PC-9 (cell line): ENCODE measurements at regions of chr9 and their contacts with region 1.

Region 1: GRCh38 chr9:14768405-14769229 is 46.1 kb upstream of the CER1 start:
- DNase-seq: peak in 1 of 2 experiments; percentile 2
- H3K4me3 ChIP-seq: no peak overlapping the region
- H3K27ac ChIP-seq: no peak overlapping the region
- H3K4me1 ChIP-seq: peaks cover 6% of the 10 kb centered on the region; the same call in 1 of the 2 replicates
- H3K27me3 ChIP-seq: no peaks in the 10 kb centered on the region
- CTCF ChIP-seq: peak; percentile 83

Region 2: DNA sequence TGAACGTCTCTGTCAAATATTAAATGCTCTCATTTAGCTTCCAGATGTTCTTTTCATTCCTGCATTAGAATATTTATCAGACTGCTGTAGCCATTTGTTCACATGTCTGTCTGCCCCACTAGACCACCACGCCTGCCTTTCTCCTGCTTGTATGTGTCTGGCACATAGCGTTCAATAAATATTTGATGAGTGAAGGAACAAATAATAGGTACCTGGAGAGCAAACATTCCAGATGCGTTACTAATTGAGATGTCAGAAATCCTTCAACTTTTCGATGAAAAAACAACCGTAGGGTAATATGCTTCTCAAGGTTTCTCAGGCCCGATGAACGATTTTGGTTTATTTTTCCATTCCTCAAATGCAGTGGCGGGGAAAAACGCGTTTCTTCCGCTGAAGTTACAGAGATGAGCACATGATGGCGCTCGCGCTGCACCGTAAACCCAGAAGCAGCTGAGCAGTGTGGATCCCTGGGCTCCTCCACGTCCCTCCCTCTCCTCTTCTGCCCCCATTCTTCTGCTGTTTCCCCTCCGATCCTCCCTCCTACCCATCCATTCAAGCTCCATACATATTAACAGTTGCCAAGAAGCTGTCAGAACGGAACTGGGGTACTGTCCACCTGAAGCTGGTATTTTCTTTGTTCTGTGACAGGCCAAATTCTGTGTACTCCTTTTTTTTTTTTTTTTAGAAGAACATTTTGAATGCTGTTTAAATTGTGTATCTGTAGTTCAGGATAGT is 1734.5 kb before region 1 on chr9:
- CTCF ChIA-PET with region 1: no interaction called
- POLR2A ChIA-PET with region 1: no interaction called
- intact Hi-C with region 1: loop called (anchors 5 kb)
- DNase-seq: peak; percentile 37 to 57
- H3K4me3 ChIP-seq: peak overlapping the region; percentile 37; the same call in 1 of the 2 replicates
- H3K27ac ChIP-seq: no peak overlapping the region
- H3K4me1 ChIP-seq: no peaks in the 10 kb centered on the region
- H3K27me3 ChIP-seq: no peaks in the 10 kb centered on the region
- CTCF ChIP-seq: peak; percentile 75

Region 3: GRCh38 chr9:13427587-13427986 is 1341.0 kb before region 1 on chr9:
- CTCF ChIA-PET with region 1: no interaction called
- POLR2A ChIA-PET with region 1: no interaction called
- intact Hi-C with region 1: loop called (anchors 2 kb)
- DNase-seq: peak in 1 of 2 experiments; percentile 5
- H3K4me3 ChIP-seq: no peak overlapping the region
- H3K27ac ChIP-seq: no peak overlapping the region
- H3K4me1 ChIP-seq: no peaks in the 10 kb centered on the region
- H3K27me3 ChIP-seq: no peaks in the 10 kb centered on the region
- CTCF ChIP-seq: peak; percentile 80

Region 4: GRCh38 chr9:14466429-14466818 is 302.2 kb before region 1 on chr9:
- CTCF ChIA-PET with region 1: no interaction called
- POLR2A ChIA-PET with region 1: no interaction called
- intact Hi-C with region 1: loop called (anchors 2 kb)
- DNase-seq: no peak
- H3K4me3 ChIP-seq: no peak overlapping the region
- H3K27ac ChIP-seq: no peak overlapping the region
- H3K4me1 ChIP-seq: no peaks in the 10 kb centered on the region
- H3K27me3 ChIP-seq: 0 out of 2 replicates have a peak, but pooled peaks cover 2% of the 10 kb centered on the region
- CTCF ChIP-seq: no peak

Region 5: DNA sequence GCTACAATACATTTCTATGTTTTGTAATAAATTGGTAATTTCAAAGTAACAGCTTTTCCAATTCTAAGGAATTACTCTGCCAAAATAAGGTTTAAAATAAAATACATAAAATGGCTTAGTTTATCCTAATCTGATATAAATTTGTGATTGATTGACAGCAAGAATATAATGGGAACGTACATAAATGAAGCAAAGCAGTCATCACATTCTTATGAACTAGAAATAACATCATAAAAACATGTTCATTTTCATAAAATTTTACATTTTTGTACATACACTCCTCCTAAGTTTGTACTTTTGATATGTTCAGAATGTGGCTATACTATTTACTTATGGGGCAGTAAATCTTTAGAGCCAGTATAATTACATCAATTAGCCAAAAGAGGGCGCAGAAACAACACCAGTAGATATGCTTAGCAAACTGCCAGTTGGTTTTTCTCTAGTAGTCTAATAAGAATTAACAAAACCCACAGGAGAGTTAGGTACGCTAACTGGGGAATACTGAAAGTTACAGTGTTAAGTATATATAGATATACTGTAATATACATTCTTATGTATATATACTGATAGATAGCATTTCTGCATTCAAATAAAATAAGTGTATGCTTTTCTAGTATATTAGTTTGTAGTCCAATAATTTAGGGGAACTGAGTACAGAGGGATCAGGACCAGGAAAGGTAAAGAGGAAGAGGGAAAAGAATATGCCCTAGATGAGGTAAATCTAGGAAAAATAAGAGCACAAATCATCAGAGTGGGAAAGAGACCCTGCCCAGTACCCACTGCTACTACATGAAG is 152.2 kb before region 1 on chr9:
- CTCF ChIA-PET with region 1: no interaction called
- POLR2A ChIA-PET with region 1: no interaction called
- intact Hi-C with region 1: loop called (anchors 1 kb)
- DNase-seq: no peak
- H3K4me3 ChIP-seq: no peak overlapping the region
- H3K27ac ChIP-seq: no peak overlapping the region
- H3K4me1 ChIP-seq: no peaks in the 10 kb centered on the region
- H3K27me3 ChIP-seq: no peaks in the 10 kb centered on the region
- CTCF ChIP-seq: peak; percentile 67

Region 6: DNA sequence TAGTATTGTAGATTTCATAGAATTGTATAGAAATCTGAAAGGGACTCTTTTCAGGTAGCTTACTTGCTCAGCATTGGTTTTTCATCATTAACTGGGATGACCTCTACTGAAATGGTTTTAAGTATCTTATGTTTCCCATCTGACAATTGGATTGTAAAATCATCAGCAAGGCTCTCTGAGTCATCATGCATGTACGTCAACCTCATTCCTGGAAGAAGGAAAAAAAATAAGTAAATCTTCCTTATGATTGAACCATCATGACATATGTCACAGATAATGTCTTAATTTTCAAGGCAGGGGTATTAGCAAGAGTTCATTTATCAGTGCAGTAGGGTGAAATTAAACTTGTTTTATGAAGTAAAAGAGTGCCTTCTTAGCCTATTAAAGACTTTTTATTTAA is 28.8 kb after region 1 on chr9:
- CTCF ChIA-PET with region 1: no interaction called
- POLR2A ChIA-PET with region 1: no interaction called
- intact Hi-C with region 1: no loop called
- DNase-seq: no peak
- H3K4me3 ChIP-seq: no peak overlapping the region
- H3K27ac ChIP-seq: no peak overlapping the region
- H3K4me1 ChIP-seq: no peaks in the 10 kb centered on the region
- H3K27me3 ChIP-seq: no peaks in the 10 kb centered on the region
- CTCF ChIP-seq: no peak

Region 7: GRCh38 chr9:15135164-15135792 is 366.7 kb after region 1 on chr9:
- CTCF ChIA-PET with region 1: interaction called, 7 read pairs
- POLR2A ChIA-PET with region 1: no interaction called
- intact Hi-C with region 1: loop called (anchors 1 kb)
- DNase-seq: peak; percentile 41 to 47
- H3K4me3 ChIP-seq: peak overlapping the region; percentile 43; the same call in 1 of the 2 replicates
- H3K27ac ChIP-seq: no peak overlapping the region
- H3K4me1 ChIP-seq: no peaks in the 10 kb centered on the region
- H3K27me3 ChIP-seq: no peaks in the 10 kb centered on the region
- CTCF ChIP-seq: peak; percentile 82

Region 8: DNA sequence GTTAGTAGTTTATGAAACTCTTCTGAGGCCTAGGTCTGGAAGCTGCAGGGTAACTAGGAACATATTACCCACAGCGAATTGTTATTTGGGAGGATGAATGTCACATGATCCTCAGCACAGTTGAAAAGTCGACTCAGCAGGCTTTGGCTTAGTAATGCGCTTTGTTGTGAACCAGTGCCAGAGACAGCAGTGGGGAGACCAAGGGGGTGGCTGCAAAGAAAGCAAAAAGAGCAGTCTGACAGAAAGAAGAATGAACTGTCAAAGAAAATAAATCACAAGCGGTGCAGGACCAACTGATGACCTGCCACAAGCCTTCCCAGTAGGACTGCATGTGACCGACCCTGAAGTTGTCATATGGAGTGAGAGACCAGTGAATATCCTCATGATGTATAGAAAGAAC is 954.3 kb after region 1 on chr9:
- CTCF ChIA-PET with region 1: no interaction called
- POLR2A ChIA-PET with region 1: no interaction called
- intact Hi-C with region 1: no loop called
- DNase-seq: no peak
- H3K4me3 ChIP-seq: no peak overlapping the region
- H3K27ac ChIP-seq: no peak overlapping the region
- H3K4me1 ChIP-seq: no peaks in the 10 kb centered on the region
- H3K27me3 ChIP-seq: no peaks in the 10 kb centered on the region
- CTCF ChIP-seq: no peak